Heart right ventricle (tissue), 16 donors: ENCODE measurements at regions of chr18 and their contacts with region 1.

Region 1: GRCh38 chr18:73990258-73990657 is 157.4 kb downstream of the FBXO15 start:
- DNase-seq: no peak
- ATAC-seq: no peak
- H3K4me3 ChIP-seq: no peak overlapping the region
- H3K27ac ChIP-seq: no peak overlapping the region
- H3K4me1 ChIP-seq: no peaks in the 10 kb centered on the region
- H3K27me3 ChIP-seq: no peaks in the 10 kb centered on the region
- CTCF ChIP-seq: no peak

Region 2: DNA sequence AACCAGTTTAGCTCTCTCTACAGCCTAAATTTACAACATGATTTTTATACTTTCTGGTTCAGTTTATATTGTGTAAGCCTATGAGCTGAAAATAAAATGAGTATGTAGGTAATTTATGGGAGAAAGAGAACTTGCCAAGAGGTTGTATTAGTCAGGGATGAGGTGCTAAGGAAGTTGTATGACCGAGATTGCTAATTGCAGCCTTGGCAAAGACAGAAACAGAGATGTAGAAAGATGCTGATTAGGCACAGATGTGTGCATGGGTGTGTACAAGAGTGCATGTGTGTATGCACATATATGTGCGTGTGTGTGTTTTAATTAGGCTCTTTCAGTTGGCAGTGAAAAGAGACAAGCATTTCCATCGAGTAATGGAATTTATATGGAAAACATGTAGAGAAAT is 56.6 kb before region 1 on chr18:
- intact Hi-C with region 1: loop called in 1 of 10 experiments (anchors 10 kb)
- DNase-seq: no peak
- ATAC-seq: no peak
- H3K4me3 ChIP-seq: no peak overlapping the region
- H3K27ac ChIP-seq: no peak overlapping the region
- H3K4me1 ChIP-seq: no peaks in the 10 kb centered on the region
- H3K27me3 ChIP-seq: no peaks in the 10 kb centered on the region
- CTCF ChIP-seq: no peak